CD4-positive, alpha-beta memory T cell (primary cell): ENCODE measurements at regions of chr2 and their contacts with region 1.

Region 1: DNA sequence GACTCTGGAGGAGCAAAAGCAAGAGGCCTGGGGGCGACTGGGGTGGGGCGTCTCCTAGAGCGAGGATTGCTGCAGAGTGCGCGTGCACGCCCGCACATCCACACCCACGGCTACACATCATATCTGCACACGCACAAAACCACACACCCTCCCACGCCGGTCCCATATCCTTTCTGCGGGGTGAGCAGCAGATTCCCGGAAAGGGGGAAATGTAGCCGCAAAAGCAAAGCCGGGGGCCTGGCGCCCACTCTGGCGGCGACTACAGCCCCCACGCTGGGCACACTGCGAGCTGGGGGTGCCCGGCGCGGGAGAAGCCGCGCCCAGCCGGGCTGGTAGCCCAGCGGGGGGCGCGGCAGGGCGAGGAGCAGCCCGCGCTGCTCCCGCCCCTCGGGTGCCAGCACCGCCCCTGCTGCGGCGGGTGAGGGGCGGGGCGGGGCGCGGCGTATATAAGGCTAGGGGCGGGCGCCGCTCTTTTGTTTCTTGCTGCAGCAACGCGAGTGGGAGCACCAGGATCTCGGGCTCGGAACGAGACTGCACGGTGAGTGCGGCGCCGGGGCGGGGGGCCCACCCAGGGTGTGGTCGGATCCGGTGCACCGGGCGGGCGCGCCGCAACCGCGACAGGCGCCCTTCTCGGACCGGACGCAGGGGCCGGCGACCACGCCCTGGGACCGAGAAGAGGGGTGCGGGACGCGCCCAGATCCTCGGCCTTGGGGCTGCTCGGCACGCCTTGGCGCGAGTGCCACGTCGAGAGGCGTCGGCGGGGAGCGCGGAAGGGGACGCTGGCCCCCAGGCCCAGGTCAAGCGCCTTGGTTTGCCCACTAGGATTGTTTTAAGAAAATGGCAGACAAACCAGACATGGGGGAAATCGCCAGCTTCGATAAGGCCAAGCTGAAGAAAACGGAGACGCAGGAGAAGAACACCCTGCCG is at the start of gene TMSB10:
- DNase-seq: peak; percentile 88 to 95 (median 92)
- H3K4me3 ChIP-seq: peak within 1 kb of the TSS; percentile 69 to 92
- H3K4me3 Mint-ChIP-seq: peak within 1 kb of the TSS; percentile 90 to 97 (median 96)
- H3K27ac ChIP-seq: peak within 1 kb of the TSS; percentile 71
- H3K27ac Mint-ChIP-seq: peak within 1 kb of the TSS; percentile 90 to 97 (median 95)
- H3K4me1 ChIP-seq: peaks cover 34% of the 10 kb centered on the region
- H3K4me1 Mint-ChIP-seq: peaks cover 46 to 74% (median 52%) of the 10 kb centered on the region in 4 donors
- H3K27me3 ChIP-seq: no peaks in the 10 kb centered on the region
- H3K27me3 Mint-ChIP-seq: no peaks in the 10 kb centered on the region
- total RNA-seq, gene TMSB10: 1,218 to 1,245 TPM

Region 2: GRCh38 chr2:84781942-84782716 is 123.3 kb before region 1 on chr2:
- CTCF ChIA-PET with region 1: no interaction called
- POLR2A ChIA-PET with region 1: interaction called, 43 read pairs
- intact Hi-C with region 1: no loop called
- DNase-seq: peak; percentile 59 to 84 (median 71)
- H3K4me3 ChIP-seq: peak overlapping the region; percentile 6 to 23
- H3K4me3 Mint-ChIP-seq: peak overlapping the region; percentile 52 to 84 (median 74)
- H3K27ac ChIP-seq: peak overlapping the region; percentile 53
- H3K27ac Mint-ChIP-seq: peak overlapping the region; percentile 84 to 96 (median 93)
- H3K4me1 ChIP-seq: peaks cover 80% of the 10 kb centered on the region
- H3K4me1 Mint-ChIP-seq: peaks cover 80 to 93% (median 84%) of the 10 kb centered on the region in 4 donors
- H3K27me3 ChIP-seq: no peaks in the 10 kb centered on the region
- H3K27me3 Mint-ChIP-seq: no peaks in the 10 kb centered on the region

Region 3: GRCh38 chr2:84846041-84846663 is 59.3 kb before region 1 on chr2:
- CTCF ChIA-PET with region 1: interaction called, 3 read pairs
- POLR2A ChIA-PET with region 1: interaction called, 35 read pairs
- intact Hi-C with region 1: no loop called
- DNase-seq: peak; percentile 67 to 84 (median 78)
- H3K4me3 ChIP-seq: peak overlapping the region; percentile 11 to 15
- H3K4me3 Mint-ChIP-seq: peak overlapping the region; percentile 31 to 84 (median 74)
- H3K27ac ChIP-seq: peak overlapping the region; percentile 61
- H3K27ac Mint-ChIP-seq: peak overlapping the region; percentile 92 to 99 (median 97)
- H3K4me1 ChIP-seq: peaks cover 99% of the 10 kb centered on the region
- H3K4me1 Mint-ChIP-seq: peaks cover 81 to 98% (median 90%) of the 10 kb centered on the region in 4 donors
- H3K27me3 ChIP-seq: no peaks in the 10 kb centered on the region
- H3K27me3 Mint-ChIP-seq: no peaks in the 10 kb centered on the region

Region 4: GRCh38 chr2:84888401-84889276 is 16.8 kb before region 1 on chr2:
- CTCF ChIA-PET with region 1: interaction called, 114 read pairs
- POLR2A ChIA-PET with region 1: interaction called, 204 read pairs
- intact Hi-C with region 1: loop called (anchors 1 kb)
- DNase-seq: peak; percentile 62 to 69 (median 66)
- H3K4me3 ChIP-seq: peak overlapping the region; percentile 32 to 42
- H3K4me3 Mint-ChIP-seq: peak overlapping the region; percentile 72 to 90 (median 82)
- H3K27ac ChIP-seq: peak overlapping the region; percentile 81
- H3K27ac Mint-ChIP-seq: peak overlapping the region; percentile 90 to 99 (median 97)
- H3K4me1 ChIP-seq: peaks cover 23% of the 10 kb centered on the region
- H3K4me1 Mint-ChIP-seq: peaks cover 22 to 43% (median 38%) of the 10 kb centered on the region in 4 donors
- H3K27me3 ChIP-seq: no peaks in the 10 kb centered on the region
- H3K27me3 Mint-ChIP-seq: no peaks in the 10 kb centered on the region

Region 5: GRCh38 chr2:84939426-84940087 is 34.1 kb after region 1 on chr2:
- CTCF ChIA-PET with region 1: no interaction called
- POLR2A ChIA-PET with region 1: interaction called, 54 read pairs
- intact Hi-C with region 1: no loop called
- DNase-seq: peak; percentile 79 to 91 (median 83)
- H3K4me3 ChIP-seq: peak overlapping the region; percentile 34 to 45
- H3K4me3 Mint-ChIP-seq: peak overlapping the region; percentile 76 to 89 (median 87)
- H3K27ac ChIP-seq: peak overlapping the region; percentile 82
- H3K27ac Mint-ChIP-seq: peak overlapping the region; percentile 95 to 99 (median 98)
- H3K4me1 ChIP-seq: peaks cover 24% of the 10 kb centered on the region
- H3K4me1 Mint-ChIP-seq: peaks cover 15 to 34% (median 28%) of the 10 kb centered on the region in 4 donors
- H3K27me3 ChIP-seq: no peaks in the 10 kb centered on the region
- H3K27me3 Mint-ChIP-seq: no peaks in the 10 kb centered on the region